ENCODE measurements at regions of chr9 and their contacts with region 1.

Region 1: GRCh38 chr9:131393622-131394463 is at the start of gene PRRC2B:
- DNase-seq: peak; percentile 87
- H3K4me3 Mint-ChIP-seq: peak within 1 kb of the TSS; percentile 89
- H3K27ac Mint-ChIP-seq: peak within 1 kb of the TSS; percentile 93
- H3K4me1 Mint-ChIP-seq: peaks cover 43% of the 10 kb centered on the region
- H3K27me3 Mint-ChIP-seq: no peaks in the 10 kb centered on the region
- total RNA-seq, gene PRRC2B: 157 to 171 TPM

Region 2: DNA sequence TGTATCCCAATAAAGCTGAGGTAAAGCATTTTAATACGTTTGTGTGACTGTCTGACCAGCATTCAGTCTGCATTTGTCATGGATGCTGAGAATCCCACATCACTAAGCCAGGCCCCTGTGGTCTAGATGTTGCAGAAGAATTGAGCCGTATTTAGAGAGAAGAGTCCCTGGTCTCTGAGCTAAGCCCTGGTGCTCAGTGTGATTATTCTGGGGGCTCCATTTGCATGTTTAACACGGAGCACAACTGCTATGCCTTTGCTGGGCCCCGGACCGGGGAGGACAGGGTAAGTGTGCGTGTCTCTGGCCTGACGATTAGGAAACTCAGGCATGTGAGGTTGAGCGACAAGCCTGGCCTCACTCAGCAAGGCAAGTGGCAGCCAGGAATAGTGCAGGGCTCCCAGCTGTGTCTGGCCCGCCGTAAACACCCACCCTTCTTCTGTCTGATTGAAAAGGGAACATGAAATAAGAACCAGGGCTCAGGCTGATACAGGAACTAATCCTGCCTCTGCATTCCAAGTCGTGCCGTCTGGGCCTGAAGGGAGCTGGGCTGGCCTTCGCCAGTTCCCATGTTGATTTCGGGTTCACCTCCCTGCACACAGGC is 139.9 kb before region 1 on chr9:
- CTCF ChIA-PET with region 1: no interaction called
- intact Hi-C with region 1: loop called (anchors 5 kb)
- DNase-seq: no peak
- H3K4me3 Mint-ChIP-seq: peak overlapping the region; percentile 77
- H3K27ac Mint-ChIP-seq: peak overlapping the region; percentile 87
- H3K4me1 Mint-ChIP-seq: peaks cover 41% of the 10 kb centered on the region
- H3K27me3 Mint-ChIP-seq: no peaks in the 10 kb centered on the region

Region 3: DNA sequence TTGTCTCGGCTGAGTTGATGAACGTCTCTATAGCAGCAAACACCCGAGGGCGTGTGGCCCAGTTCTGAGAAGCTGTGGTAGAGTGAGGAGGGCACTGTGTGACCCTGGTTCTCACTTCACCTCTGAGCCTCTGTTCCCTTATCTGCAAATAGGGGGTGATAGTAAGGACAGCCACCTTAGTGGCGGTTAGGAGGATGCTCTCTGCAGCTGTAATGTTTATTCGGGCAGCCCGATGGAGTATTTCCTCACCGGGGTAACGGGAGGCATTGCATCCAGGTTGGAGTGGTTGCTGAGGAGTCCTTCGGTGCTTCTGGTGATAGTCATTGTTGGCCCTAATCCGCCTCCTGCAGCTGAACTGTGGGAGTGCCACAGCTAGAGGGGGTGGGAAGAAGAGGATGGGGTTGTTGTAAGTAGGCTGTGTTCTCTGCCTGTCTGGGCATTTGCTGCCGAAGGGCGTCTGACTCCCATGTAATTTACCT is 13.9 kb after region 1 on chr9:
- CTCF ChIA-PET with region 1: interaction called, 6 read pairs
- intact Hi-C with region 1: loop called (anchors 1 kb)
- DNase-seq: peak; percentile 65
- H3K4me3 Mint-ChIP-seq: peak overlapping the region; percentile 56
- H3K27ac Mint-ChIP-seq: peak overlapping the region; percentile 75
- H3K4me1 Mint-ChIP-seq: peaks cover 87% of the 10 kb centered on the region
- H3K27me3 Mint-ChIP-seq: no peaks in the 10 kb centered on the region

Region 4: DNA sequence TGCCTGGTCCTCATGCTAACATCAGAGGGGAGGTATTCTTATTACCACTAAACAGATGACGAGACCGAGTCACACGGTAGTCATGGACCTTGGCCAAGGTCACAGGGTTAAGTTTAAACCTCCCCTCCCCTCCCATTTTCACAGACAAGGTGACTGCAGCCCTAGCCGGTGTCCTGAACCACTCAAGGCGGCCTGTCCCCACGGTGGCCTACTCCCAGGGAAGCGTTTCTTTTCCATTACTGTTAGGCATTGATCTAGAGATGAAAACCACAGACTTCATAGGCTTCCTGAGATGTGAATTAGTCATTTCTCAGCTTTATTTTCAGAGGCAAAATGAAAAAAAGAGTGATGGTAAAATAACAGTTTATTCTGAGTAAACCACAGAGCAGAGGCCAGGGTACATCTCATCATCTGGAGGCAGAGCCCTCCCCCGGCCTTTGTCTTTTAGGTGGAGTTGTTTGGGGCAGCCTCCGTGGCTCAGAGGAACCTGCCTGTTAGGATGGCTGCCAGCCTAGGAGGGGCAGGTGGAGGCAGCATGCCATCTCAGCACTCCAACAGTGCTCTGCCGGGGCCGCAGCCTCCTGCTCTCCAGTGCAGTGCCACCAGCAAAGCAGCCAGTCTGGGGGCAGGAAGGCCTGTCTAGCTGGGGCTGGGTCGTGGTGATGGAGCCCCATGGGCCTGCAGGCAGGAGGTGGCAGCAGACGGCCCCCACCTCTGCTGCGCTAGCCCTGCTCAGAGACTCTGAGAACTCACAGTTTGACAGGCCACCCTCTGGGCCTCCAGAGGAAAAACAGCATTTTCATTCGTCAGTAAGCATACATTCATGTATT is 274.8 kb after region 1 on chr9:
- CTCF ChIA-PET with region 1: no interaction called
- intact Hi-C with region 1: loop called (anchors 5 kb)
- DNase-seq: peak; percentile 85
- H3K4me3 Mint-ChIP-seq: peak overlapping the region; percentile 60
- H3K27ac Mint-ChIP-seq: peak overlapping the region; percentile 100
- H3K4me1 Mint-ChIP-seq: peaks cover 79% of the 10 kb centered on the region
- H3K27me3 Mint-ChIP-seq: no peaks in the 10 kb centered on the region

Region 5: DNA sequence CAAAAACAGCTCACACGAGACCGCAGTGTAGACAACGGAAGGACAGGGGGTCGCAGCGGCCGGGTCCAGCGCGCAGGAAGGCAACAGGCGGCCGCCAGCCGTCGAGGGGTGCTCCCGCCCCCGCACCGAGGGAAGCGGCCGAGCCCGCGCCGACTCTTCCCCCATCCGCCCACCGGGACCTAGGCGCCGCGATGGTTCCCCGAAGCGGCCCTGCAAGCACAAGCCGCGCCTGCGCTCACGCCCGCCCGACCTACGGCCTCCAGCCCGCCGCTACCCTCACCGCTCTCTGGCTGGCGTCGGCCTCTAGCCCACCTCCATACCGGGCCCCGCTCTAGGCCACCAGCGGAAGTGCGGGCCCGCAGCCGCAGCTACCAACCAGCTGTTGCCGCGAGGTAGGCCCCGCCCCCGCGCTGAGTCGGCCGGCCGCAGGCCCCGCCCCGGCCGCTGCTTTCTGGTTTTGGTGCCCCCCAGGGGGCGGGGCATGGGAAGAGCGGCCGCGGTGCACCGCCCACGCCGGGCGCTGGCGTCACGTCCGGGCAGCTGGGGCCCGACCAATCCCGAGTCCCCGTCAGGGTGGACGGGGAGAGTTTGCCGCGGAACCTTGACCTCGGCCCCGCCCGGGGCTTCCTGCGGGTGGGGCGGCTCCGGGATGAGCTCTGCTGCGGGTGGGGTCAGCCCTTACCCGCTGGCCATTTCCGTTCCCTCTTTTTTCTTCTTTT is 961.0 kb after region 1 on chr9 and contains the start of gene SETX:
- CTCF ChIA-PET with region 1: no interaction called
- intact Hi-C with region 1: loop called (anchors 10 kb)
- DNase-seq: peak; percentile 96
- H3K4me3 Mint-ChIP-seq: peak within 1 kb of the TSS; percentile 88
- H3K27ac Mint-ChIP-seq: peak within 1 kb of the TSS; percentile 95
- H3K4me1 Mint-ChIP-seq: peaks cover 35% of the 10 kb centered on the region
- H3K27me3 Mint-ChIP-seq: no peaks in the 10 kb centered on the region
- total RNA-seq, gene SETX: 26.4 to 26.7 TPM

Measured in activated naive CD4-positive, alpha-beta T cell treated with anti-CD3 and anti-CD28 coated beads for 36 hours (primary cell).